ENCODE measurements at regions of chr4 and their contacts with region 1.

Region 1: DNA sequence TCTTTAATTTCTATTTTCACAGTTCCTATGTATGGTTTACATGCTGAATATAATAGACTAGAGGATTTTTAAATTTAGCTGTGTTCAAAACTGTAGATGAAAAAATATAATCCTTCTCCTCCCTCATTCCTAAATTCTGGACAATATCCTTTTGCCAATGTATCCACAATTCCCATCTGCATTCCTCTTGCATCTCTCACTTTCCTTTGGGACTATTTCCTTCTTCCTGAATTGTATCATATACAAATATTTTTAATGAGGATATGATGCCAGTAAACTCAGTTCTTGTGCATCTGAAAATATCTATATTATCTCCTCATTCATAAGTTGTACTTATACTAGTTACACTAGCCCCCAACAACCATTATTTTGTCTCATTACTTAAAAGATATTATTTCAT is 46.7 kb downstream of the DDX60L start:
- DNase-seq: peak; percentile 74
- H3K4me3 ChIP-seq: peak overlapping the region in 1 of 3 experiments; percentile 11
- H3K27ac ChIP-seq: peak overlapping the region; percentile 86
- H3K4me1 ChIP-seq: peaks cover 33% of the 10 kb centered on the region
- H3K27me3 ChIP-seq: no peaks in the 10 kb centered on the region
- CTCF ChIP-seq: no peak
- POLR2A ChIP-seq: no peak

Region 2: DNA sequence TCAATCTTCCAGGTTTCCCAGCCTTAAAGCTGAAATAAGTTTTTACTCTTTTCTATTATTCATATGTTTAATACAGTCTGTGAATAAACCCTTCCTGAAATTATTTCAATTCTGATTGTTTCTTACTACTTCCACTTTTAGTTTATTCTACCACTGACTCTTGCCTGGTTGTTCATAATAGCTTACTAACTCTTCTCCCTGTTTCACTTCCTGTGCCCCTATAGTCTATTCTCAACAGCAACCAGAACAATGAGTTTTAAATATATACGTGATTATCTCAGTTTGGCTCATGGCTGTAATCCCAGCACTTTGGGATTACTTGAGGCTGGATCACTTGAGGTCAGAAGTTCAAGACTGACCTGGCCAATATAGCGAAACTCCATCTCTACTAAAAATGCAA is 791.3 kb before region 1 on chr4:
- CTCF ChIA-PET with region 1: no interaction called
- POLR2A ChIA-PET with region 1: no interaction called
- dilution Hi-C with region 1: no loop called
- intact Hi-C with region 1: no loop called
- DNase-seq: peak; percentile 13
- H3K4me3 ChIP-seq: no peak overlapping the region
- H3K27ac ChIP-seq: no peak overlapping the region
- H3K4me1 ChIP-seq: no peaks in the 10 kb centered on the region
- H3K27me3 ChIP-seq: no peaks in the 10 kb centered on the region
- CTCF ChIP-seq: no peak
- POLR2A ChIP-seq: no peak

Region 3: DNA sequence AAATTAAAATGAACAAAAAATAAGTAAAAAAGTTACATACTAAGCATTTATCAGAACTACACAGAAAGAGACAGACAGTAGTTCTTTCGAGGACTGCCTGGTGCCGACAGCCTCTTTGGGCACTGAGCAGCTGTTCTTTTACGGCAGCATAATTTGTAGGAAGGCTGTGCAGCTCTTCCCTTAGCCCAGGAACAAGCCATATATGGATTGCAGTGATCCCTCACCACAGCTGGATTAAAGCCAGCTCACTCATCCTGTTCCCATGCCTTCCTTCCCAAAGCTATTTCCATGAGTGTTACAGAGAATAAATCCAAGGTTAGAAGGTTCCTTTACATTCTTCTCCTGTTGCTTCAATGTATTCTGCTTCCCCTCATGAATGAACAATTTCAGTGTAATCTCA is 25.0 kb before region 1 on chr4:
- CTCF ChIA-PET with region 1: no interaction called
- POLR2A ChIA-PET with region 1: no interaction called
- dilution Hi-C with region 1: no loop called
- intact Hi-C with region 1: loop called (anchors 1 kb)
- DNase-seq: peak; percentile 97
- H3K4me3 ChIP-seq: no peak overlapping the region
- H3K27ac ChIP-seq: peak overlapping the region; percentile 72
- H3K4me1 ChIP-seq: peaks cover 28% of the 10 kb centered on the region
- H3K27me3 ChIP-seq: no peaks in the 10 kb centered on the region
- CTCF ChIP-seq: no peak
- POLR2A ChIP-seq: peak; percentile 47

Region 4: DNA sequence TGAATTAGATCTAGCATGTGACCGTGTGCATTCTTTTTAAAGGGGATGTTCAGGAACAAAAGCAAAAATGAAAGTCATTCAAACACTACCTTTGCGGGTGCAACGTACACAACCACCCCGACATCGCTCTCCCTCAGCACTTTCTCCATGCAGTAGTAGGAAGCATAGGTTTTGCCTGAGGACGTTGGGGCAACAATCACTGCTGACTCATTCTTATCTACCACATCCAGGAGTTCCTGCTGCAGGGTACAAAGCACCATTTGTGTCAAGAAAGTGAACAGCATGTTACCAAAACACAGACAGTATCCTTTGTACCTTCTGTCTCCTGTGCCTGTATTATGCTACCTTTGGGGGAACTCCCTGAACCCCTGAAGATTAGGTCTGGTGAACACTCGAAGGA is 11.9 kb before region 1 on chr4:
- CTCF ChIA-PET with region 1: no interaction called
- POLR2A ChIA-PET with region 1: no interaction called
- dilution Hi-C with region 1: no loop called
- intact Hi-C with region 1: loop called (anchors 1 kb)
- DNase-seq: peak; percentile 98
- H3K4me3 ChIP-seq: no peak overlapping the region
- H3K27ac ChIP-seq: peak overlapping the region; percentile 76
- H3K4me1 ChIP-seq: peaks cover 21% of the 10 kb centered on the region
- H3K27me3 ChIP-seq: no peaks in the 10 kb centered on the region
- CTCF ChIP-seq: no peak
- POLR2A ChIP-seq: peak; percentile 69

Region 5: GRCh38 chr4:168461821-168462220 is 28.2 kb after region 1 on chr4:
- CTCF ChIA-PET with region 1: no interaction called
- POLR2A ChIA-PET with region 1: no interaction called
- dilution Hi-C with region 1: no loop called
- intact Hi-C with region 1: no loop called
- DNase-seq: peak; percentile 50
- H3K4me3 ChIP-seq: no peak overlapping the region
- H3K27ac ChIP-seq: no peak overlapping the region
- H3K4me1 ChIP-seq: peaks cover 2% of the 10 kb centered on the region
- H3K27me3 ChIP-seq: no peaks in the 10 kb centered on the region
- CTCF ChIP-seq: no peak
- POLR2A ChIP-seq: no peak

Region 6: GRCh38 chr4:168558599-168558998 is 125.0 kb after region 1 on chr4:
- CTCF ChIA-PET with region 1: no interaction called
- POLR2A ChIA-PET with region 1: no interaction called
- dilution Hi-C with region 1: no loop called
- intact Hi-C with region 1: loop called (anchors 5 kb)
- DNase-seq: peak; percentile 95
- H3K4me3 ChIP-seq: no peak overlapping the region
- H3K27ac ChIP-seq: peak overlapping the region; percentile 69
- H3K4me1 ChIP-seq: peaks cover 47% of the 10 kb centered on the region
- H3K27me3 ChIP-seq: no peaks in the 10 kb centered on the region
- CTCF ChIP-seq: no peak
- POLR2A ChIP-seq: no peak